ENCODE measurements at regions of chr4 and their contacts with region 1.

Region 1: GRCh38 chr4:140153718-140154571 is at the start of gene MAML3:
- DNase-seq: peak in 1 of 2 donors; percentile 95
- H3K4me3 ChIP-seq: peak within 1 kb of the TSS; percentile 72 to 73
- H3K27ac ChIP-seq: peak within 1 kb of the TSS; percentile 94
- H3K4me1 ChIP-seq: peaks cover 13% of the 10 kb centered on the region
- H3K27me3 ChIP-seq: no peaks in the 10 kb centered on the region
- CTCF ChIP-seq: peak in 1 of 3 experiments; percentile 15
- POLR2A ChIP-seq: peak in 1 of 2 donors; percentile 64
- total RNA-seq, gene MAML3: 16.2 TPM

Region 2: GRCh38 chr4:139734875-139735380 is 419.0 kb before region 1 on chr4:
- intact Hi-C with region 1: loop called (anchors 5 kb)
- DNase-seq: no peak
- H3K4me3 ChIP-seq: peak overlapping the region; percentile 53 to 54
- H3K27ac ChIP-seq: peak overlapping the region; percentile 88
- H3K4me1 ChIP-seq: peaks cover 30% of the 10 kb centered on the region
- H3K27me3 ChIP-seq: no peaks in the 10 kb centered on the region
- CTCF ChIP-seq: peak in 2 of 3 experiments; percentile 69 to 78
- POLR2A ChIP-seq: peak in 1 of 2 donors; percentile 19

Region 3: GRCh38 chr4:140049024-140049848 is 104.7 kb before region 1 on chr4:
- intact Hi-C with region 1: loop called (anchors 10 kb)
- DNase-seq: no peak
- H3K4me3 ChIP-seq: peak overlapping the region; percentile 33 to 48
- H3K27ac ChIP-seq: peak overlapping the region; percentile 67
- H3K4me1 ChIP-seq: peaks cover 36% of the 10 kb centered on the region
- H3K27me3 ChIP-seq: no peaks in the 10 kb centered on the region
- CTCF ChIP-seq: peak in 1 of 3 experiments; percentile 24
- POLR2A ChIP-seq: no peak

Region 4: GRCh38 chr4:140252742-140253555 is 99.0 kb after region 1 on chr4:
- intact Hi-C with region 1: loop called (anchors 2 kb)
- DNase-seq: no peak
- H3K4me3 ChIP-seq: peak overlapping the region; percentile 60 to 71
- H3K27ac ChIP-seq: peak overlapping the region; percentile 96
- H3K4me1 ChIP-seq: peaks cover 33% of the 10 kb centered on the region
- H3K27me3 ChIP-seq: no peaks in the 10 kb centered on the region
- CTCF ChIP-seq: peak; percentile 62 to 93 (median 74)
- POLR2A ChIP-seq: no peak

Measured in vagina (tissue), 2 donors.